Activated CD4-positive, alpha-beta T cell treated with anti-CD3 and anti-CD28 coated beads for 36 hours (primary cell): ENCODE measurements at regions of chr6 and their contacts with region 1.

Region 1: GRCh38 chr6:34154668-34155447 is 9.0 kb upstream of the GRM4 start:
- DNase-seq: peak; percentile 83
- ATAC-seq: peak; percentile 91
- H3K4me3 Mint-ChIP-seq: no peak overlapping the region
- H3K27ac Mint-ChIP-seq: no peak overlapping the region
- H3K4me1 Mint-ChIP-seq: peaks cover 4% of the 10 kb centered on the region
- H3K27me3 Mint-ChIP-seq: peaks cover 34% of the 10 kb centered on the region

Region 2: GRCh38 chr6:33744001-33744848 is 410.6 kb before region 1 on chr6:
- CTCF ChIA-PET with region 1: interaction called, 5 read pairs
- POLR2A ChIA-PET with region 1: no interaction called
- intact Hi-C with region 1: loop called (anchors 1 to 10 kb)
- DNase-seq: peak; percentile 85
- ATAC-seq: peak; percentile 89
- H3K4me3 Mint-ChIP-seq: no peak overlapping the region
- H3K27ac Mint-ChIP-seq: no peak overlapping the region
- H3K4me1 Mint-ChIP-seq: no peaks in the 10 kb centered on the region
- H3K27me3 Mint-ChIP-seq: no peaks in the 10 kb centered on the region

Region 3: GRCh38 chr6:33771146-33772081 is 383.4 kb before region 1 on chr6:
- CTCF ChIA-PET with region 1: interaction called, 9 read pairs
- POLR2A ChIA-PET with region 1: no interaction called
- intact Hi-C with region 1: loop called (anchors 1 to 2 kb)
- DNase-seq: peak; percentile 82
- ATAC-seq: peak; percentile 76
- H3K4me3 Mint-ChIP-seq: no peak overlapping the region
- H3K27ac Mint-ChIP-seq: no peak overlapping the region
- H3K4me1 Mint-ChIP-seq: peaks cover 2% of the 10 kb centered on the region
- H3K27me3 Mint-ChIP-seq: no peaks in the 10 kb centered on the region

Region 4: GRCh38 chr6:33958526-33959333 is 196.1 kb before region 1 on chr6:
- CTCF ChIA-PET with region 1: no interaction called
- POLR2A ChIA-PET with region 1: no interaction called
- intact Hi-C with region 1: loop called in 1 of 2 experiments (anchors 10 kb)
- DNase-seq: peak; percentile 42
- ATAC-seq: no peak
- H3K4me3 Mint-ChIP-seq: no peak overlapping the region
- H3K27ac Mint-ChIP-seq: no peak overlapping the region
- H3K4me1 Mint-ChIP-seq: peaks cover 9% of the 10 kb centered on the region
- H3K27me3 Mint-ChIP-seq: peaks cover 2% of the 10 kb centered on the region

Region 5: GRCh38 chr6:34055223-34055933 is 99.5 kb before region 1 on chr6:
- CTCF ChIA-PET with region 1: interaction called, 36 read pairs
- POLR2A ChIA-PET with region 1: no interaction called
- intact Hi-C with region 1: loop called (anchors 1 kb)
- DNase-seq: peak; percentile 80
- ATAC-seq: peak; percentile 85
- H3K4me3 Mint-ChIP-seq: no peak overlapping the region
- H3K27ac Mint-ChIP-seq: no peak overlapping the region
- H3K4me1 Mint-ChIP-seq: no peaks in the 10 kb centered on the region
- H3K27me3 Mint-ChIP-seq: no peaks in the 10 kb centered on the region